Gastrocnemius medialis (tissue), 4 donors: ENCODE measurements at regions of chr6 and their contacts with region 1.

Region 1: GRCh38 chr6:110873981-110874879 is at the start of gene AMD1:
- DNase-seq: peak; percentile 98
- ATAC-seq: peak; percentile 71 to 79
- H3K4me3 ChIP-seq: peak within 1 kb of the TSS; percentile 79 to 94 (median 87)
- H3K27ac ChIP-seq: peak within 1 kb of the TSS; percentile 92 to 97 (median 96)
- H3K4me1 ChIP-seq: peaks cover 24 to 29% of the 10 kb centered on the region in 2 donors
- H3K27me3 ChIP-seq: no peaks in the 10 kb centered on the region
- CTCF ChIP-seq: no peak
- POLR2A ChIP-seq: peak; percentile 99
- total RNA-seq, gene AMD1: 33.5 to 57.1 (median 45.1) TPM

Region 2: DNA sequence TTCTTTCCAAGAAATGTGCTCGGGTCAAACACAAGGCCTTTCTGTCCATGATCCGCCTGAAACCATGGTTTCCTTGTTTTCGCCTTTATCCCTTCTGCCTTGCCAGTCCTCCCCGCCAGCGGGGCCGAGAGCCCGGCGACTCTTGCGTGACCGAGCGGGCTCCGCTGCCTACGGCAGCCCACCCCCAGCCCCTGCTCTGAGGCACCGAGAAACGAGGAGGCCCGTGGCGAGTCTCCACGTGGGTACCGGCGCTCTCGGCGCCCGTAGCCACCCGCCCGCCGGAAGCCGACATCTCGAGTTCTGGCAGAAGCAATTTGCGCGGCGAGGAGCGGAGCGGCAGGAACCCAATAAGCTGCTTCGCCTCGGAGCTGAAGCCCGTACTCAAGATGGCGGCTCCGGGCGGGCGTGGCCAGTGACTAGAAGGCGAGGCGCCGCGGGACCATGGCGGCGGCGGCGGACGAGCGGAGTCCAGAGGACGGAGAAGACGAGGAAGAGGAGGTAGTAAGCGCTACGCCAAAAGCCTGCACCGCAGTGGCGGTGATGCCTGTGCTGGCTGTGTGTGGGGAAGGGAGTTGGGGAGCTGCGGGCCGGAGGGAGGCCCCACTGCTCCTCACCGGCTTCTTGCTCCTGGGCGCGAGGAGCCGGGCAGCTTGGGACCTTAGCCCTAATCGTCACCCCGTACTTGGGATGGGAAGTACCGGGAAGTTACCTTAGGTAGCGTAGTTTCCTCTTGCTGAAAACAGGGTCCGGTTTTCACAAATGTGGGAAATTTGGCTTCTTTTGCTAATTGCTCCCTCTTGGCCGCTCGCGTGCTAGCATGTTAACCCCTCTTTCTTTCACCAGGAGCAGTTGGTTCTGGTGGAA is 84.3 kb after region 1 on chr6 and contains the start of gene GTF3C6:
- in situ Hi-C with region 1: loop called in 1 of 4 experiments (anchors 10 kb)
- intact Hi-C with region 1: loop called (anchors 1 kb)
- DNase-seq: peak; percentile 88 to 89
- ATAC-seq: peak; percentile 97 to 99
- H3K4me3 ChIP-seq: peak within 1 kb of the TSS; percentile 81 to 98 (median 92)
- H3K27ac ChIP-seq: peak within 1 kb of the TSS; percentile 89 to 91 (median 90)
- H3K4me1 ChIP-seq: peaks cover 11 to 12% of the 10 kb centered on the region in 2 donors
- H3K27me3 ChIP-seq: no peaks in the 10 kb centered on the region
- CTCF ChIP-seq: no peak
- POLR2A ChIP-seq: peak; percentile 35 to 41
- total RNA-seq, gene GTF3C6: 76.7 to 105 (median 82.4) TPM

Region 3: GRCh38 chr6:110981202-110981600 is 107.0 kb after region 1 on chr6:
- in situ Hi-C with region 1: no loop called
- intact Hi-C with region 1: loop called (anchors 1 kb)
- DNase-seq: no peak
- ATAC-seq: no peak
- H3K4me3 ChIP-seq: peak overlapping the region; percentile 90 to 96 (median 93)
- H3K27ac ChIP-seq: peak overlapping the region; percentile 79 to 94 (median 89)
- H3K4me1 ChIP-seq: peaks cover 0 to 9% of the 10 kb centered on the region in 2 donors
- H3K27me3 ChIP-seq: no peaks in the 10 kb centered on the region
- CTCF ChIP-seq: no peak
- POLR2A ChIP-seq: no peak